OCI-LY7 (cell line): ENCODE measurements at regions of chr18 and their contacts with region 1.

Region 1: GRCh38 chr18:35407871-35408481 is 30.8 kb upstream of the ZNF396 start:
- DNase-seq: peak; percentile 68
- H3K4me3 ChIP-seq: no peak overlapping the region
- H3K27ac ChIP-seq: no peak overlapping the region
- H3K4me1 ChIP-seq: peaks cover 35% of the 10 kb centered on the region
- CTCF ChIP-seq: peak; percentile 80

Region 2: DNA sequence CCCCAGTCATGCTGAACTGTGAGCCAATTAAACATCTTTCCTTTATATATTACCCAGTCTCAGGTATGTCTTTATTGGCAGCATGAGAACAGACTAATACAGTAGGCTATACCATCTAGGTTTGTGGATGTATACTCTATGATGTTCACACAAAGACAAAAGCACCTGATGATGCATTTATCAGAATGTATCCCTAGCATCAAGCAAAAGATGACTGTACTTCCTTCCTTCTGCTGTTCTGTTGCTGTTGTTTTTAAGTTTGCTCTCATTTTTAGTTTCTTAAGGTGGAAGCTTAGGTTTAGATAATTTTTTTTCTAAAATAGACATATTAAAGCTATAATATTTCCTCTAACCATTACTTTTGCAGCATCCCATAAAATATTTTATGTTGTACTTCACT is 130.3 kb before region 1 on chr18:
- CTCF ChIA-PET with region 1: no interaction called
- POLR2A ChIA-PET with region 1: no interaction called
- intact Hi-C with region 1: no loop called
- DNase-seq: no peak
- H3K4me3 ChIP-seq: no peak overlapping the region
- H3K27ac ChIP-seq: no peak overlapping the region
- H3K4me1 ChIP-seq: no peaks in the 10 kb centered on the region
- CTCF ChIP-seq: no peak

Region 3: GRCh38 chr18:35467624-35468016 is 59.6 kb after region 1 on chr18:
- CTCF ChIA-PET with region 1: no interaction called
- POLR2A ChIA-PET with region 1: no interaction called
- intact Hi-C with region 1: loop called (anchors 2 kb)
- DNase-seq: peak; percentile 75
- H3K4me3 ChIP-seq: no peak overlapping the region
- H3K27ac ChIP-seq: peak overlapping the region; percentile 18
- H3K4me1 ChIP-seq: peaks cover 24% of the 10 kb centered on the region
- CTCF ChIP-seq: no peak

Region 4: GRCh38 chr18:35484034-35484433 is 76.1 kb after region 1 on chr18:
- CTCF ChIA-PET with region 1: no interaction called
- POLR2A ChIA-PET with region 1: no interaction called
- intact Hi-C with region 1: no loop called
- DNase-seq: no peak
- H3K4me3 ChIP-seq: no peak overlapping the region
- H3K27ac ChIP-seq: no peak overlapping the region
- H3K4me1 ChIP-seq: no peaks in the 10 kb centered on the region
- CTCF ChIP-seq: no peak

Region 5: GRCh38 chr18:35497370-35498197 is 89.6 kb after region 1 on chr18 and contains the start of gene INO80C:
- CTCF ChIA-PET with region 1: interaction called, 6 read pairs
- POLR2A ChIA-PET with region 1: interaction called, 4 read pairs
- intact Hi-C with region 1: loop called (anchors 5 kb)
- DNase-seq: peak; percentile 88
- H3K4me3 ChIP-seq: peak within 1 kb of the TSS; percentile 71
- H3K27ac ChIP-seq: peak within 1 kb of the TSS; percentile 47
- H3K4me1 ChIP-seq: peaks cover 11% of the 10 kb centered on the region
- CTCF ChIP-seq: no peak
- total RNA-seq, gene INO80C: 5.9 and 13.1 TPM in 2 replicates

Region 6: DNA sequence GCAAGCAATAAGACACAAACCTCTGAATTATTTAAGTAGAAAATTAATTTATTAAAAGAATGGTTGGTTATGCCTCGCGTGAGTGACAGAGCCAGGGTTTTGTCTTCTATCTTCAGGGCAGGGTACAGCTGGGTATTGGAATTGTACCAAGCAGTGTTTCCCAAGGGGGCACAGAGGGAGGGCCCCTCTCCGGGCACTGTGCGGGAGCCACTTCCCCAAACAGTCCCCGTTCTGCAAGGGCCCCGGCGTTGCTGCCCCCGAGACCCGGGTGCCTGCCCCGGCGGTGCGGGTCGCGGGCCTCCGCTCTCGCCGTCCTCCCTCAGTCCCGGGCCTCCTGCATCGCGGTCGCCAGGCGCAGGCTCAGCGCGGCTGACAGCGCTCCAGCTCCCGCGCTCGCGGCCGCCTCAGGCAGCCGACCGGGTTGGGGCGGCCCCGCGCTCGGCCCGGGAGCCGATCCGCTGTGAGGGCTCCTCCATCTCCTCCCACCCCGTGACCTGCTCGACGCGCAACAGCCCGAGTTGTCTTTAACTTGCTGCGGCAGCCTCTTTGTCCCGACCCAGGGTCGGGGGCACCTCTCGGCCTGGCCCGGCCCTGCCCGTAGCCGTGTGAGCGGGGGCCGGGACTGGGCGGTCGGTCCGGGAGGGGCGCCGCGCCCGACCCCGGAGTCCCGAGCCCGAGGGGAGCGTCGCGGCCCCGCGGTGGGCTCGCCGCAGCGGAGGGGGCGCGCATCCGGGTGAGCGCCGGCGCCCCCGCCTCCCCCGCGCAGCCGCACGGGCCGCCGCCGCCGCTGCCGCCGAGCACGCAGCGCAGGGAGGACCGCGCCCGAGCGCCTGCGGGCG is 172.9 kb after region 1 on chr18:
- CTCF ChIA-PET with region 1: no interaction called
- POLR2A ChIA-PET with region 1: no interaction called
- intact Hi-C with region 1: loop called (anchors 5 kb)
- DNase-seq: peak; percentile 57
- H3K4me3 ChIP-seq: peak overlapping the region; percentile 72
- H3K27ac ChIP-seq: peak overlapping the region; percentile 39
- H3K4me1 ChIP-seq: peaks cover 18% of the 10 kb centered on the region
- CTCF ChIP-seq: no peak

Region 7: GRCh38 chr18:35851286-35851970 is 443.5 kb after region 1 on chr18:
- CTCF ChIA-PET with region 1: no interaction called
- POLR2A ChIA-PET with region 1: no interaction called
- intact Hi-C with region 1: no loop called
- DNase-seq: no peak
- H3K4me3 ChIP-seq: no peak overlapping the region
- H3K27ac ChIP-seq: no peak overlapping the region
- H3K4me1 ChIP-seq: no peaks in the 10 kb centered on the region
- CTCF ChIP-seq: no peak